ENCODE measurements at regions of chr4 and their contacts with region 1.

Region 1: DNA sequence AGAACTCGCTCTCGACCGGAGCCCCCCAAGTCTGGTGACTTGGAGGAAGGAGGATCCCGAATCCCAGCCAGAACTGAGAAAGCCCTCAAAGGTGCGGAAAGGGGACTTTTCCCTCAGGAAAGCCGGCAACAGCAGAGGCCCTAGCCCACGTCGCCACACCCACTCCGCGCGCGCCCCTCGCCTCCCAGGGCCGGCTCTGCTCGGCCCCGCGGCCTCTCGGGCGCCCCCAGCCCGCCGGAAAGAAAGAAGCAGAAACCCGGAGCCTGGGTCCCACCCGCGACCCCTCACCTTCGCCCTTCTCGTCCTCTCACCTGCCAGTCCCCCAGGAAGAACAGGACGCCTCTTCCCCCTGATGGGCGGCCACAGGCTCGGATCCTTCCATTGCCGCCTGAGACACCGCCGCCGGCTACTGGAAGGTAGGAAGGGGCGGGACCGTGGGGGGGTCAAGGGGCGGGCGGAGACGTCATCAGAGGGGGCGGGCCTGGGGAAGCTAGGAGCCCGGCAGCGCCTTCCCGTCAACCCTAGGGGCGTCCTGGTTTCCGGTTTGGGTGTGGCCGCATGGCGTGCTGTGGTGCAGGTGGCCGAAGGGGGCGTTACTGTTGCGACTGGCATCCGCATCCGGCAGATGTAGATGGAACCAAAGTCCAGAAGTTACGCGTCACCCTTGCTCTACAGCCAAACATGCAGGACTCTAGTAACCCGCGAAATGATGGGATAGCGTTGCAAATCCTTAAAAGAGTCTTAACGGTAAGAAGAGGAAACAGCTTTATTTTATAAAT is at the start of gene UBA6:
- DNase-seq: peak; percentile 97
- ATAC-seq: peak; percentile 94
- H3K4me3 Mint-ChIP-seq: peak within 1 kb of the TSS; percentile 90
- H3K27ac Mint-ChIP-seq: peak within 1 kb of the TSS; percentile 96
- H3K4me1 Mint-ChIP-seq: peaks cover 55% of the 10 kb centered on the region
- H3K27me3 Mint-ChIP-seq: no peaks in the 10 kb centered on the region
- total RNA-seq, gene UBA6: 90.8 to 91.1 TPM

Region 2: DNA sequence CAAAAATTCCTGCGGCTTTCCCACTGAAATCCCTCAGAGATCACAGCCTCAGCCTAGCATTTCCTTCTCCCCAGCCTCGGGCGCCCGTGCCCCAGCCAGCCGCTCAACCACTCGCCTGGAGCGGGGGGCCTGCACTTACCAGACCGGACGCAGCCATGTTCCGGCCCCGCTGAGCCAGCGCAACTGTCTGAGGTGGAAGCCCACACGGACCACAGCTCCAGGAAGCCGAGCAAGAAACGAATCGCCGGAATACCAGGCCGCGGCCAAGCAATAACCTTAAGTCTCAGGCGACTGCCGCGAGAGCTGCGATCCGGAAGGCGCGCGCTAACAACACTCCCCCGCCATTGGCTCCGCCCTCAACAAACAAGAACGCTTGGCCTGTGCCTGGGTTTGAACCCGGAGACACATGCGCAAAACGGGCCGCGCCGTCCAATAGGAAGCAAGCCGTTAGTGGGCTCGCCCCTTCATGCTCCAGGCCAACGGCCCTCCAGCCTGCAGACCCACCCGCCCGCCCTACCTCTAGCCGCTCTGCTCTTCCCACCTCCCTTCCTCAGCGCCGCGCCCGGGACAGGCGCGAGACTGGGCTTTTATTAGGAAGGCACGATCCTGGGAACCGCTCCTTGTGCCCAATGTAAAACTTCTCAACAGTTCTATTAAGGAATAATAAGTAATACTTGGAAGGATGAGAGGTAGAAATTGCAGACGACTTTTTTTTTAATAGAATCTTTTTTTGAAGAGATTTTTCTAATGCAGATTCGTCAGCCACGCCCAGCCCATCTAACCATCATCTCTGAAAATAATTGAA is 155.5 kb before region 1 on chr4 and contains the start of gene CENPC:
- CTCF ChIA-PET with region 1: interaction called, 7 read pairs
- POLR2A ChIA-PET with region 1: interaction called, 27 read pairs
- DNase-seq: peak; percentile 98
- ATAC-seq: peak; percentile 98
- H3K4me3 Mint-ChIP-seq: peak within 1 kb of the TSS; percentile 97
- H3K27ac Mint-ChIP-seq: peak within 1 kb of the TSS; percentile 97
- H3K4me1 Mint-ChIP-seq: peaks cover 37% of the 10 kb centered on the region
- H3K27me3 Mint-ChIP-seq: no peaks in the 10 kb centered on the region
- total RNA-seq, gene CENPC: 33.2 to 33.7 TPM